ENCODE measurements at regions of chr3 and their contacts with region 1.

Region 1: DNA sequence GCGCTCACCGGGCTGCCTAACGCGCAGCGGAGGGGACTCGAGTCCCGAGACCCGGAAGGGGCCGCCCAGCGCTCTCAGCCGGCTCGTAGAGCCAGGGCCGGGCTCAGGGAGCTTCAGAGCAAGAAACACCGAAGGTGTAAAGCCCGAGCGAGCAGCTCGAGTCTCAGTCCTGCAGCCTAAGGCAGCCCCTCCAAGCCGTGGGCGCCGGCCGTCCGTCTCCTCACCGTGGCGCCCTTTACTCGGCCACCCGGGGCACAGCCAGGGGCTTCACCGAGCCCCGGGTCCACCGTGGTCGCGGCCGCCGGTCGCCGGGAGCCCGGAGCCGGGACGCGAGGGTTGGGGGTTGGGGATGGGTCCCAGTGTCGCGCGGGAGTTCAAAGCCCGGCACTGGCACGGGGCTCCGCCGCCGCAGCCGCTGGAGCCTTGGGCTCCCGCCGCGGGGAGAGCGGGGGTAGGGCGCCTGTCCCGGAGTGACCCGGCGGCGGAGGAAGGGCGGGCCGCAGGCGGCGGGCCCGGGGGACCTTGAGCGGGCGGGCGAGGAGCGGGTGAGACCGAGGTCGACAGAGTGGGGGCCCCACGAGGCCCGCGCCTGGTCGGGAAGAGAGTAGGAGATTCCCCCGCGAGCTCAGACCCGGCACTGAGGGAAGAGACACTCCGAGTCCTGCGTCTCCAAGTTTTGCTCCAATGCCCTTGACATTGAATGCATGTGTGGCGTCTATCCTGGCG is 26.9 kb upstream of the THRB start:
- DNase-seq: peak; percentile 63
- ATAC-seq: peak; percentile 85
- H3K4me3 ChIP-seq: peak overlapping the region in 4 of 5 experiments; percentile 58 to 73 (median 70)
- H3K4me3 Mint-ChIP-seq: peak overlapping the region; percentile 88
- H3K27ac ChIP-seq: peak overlapping the region in 1 of 2 donors; percentile 53
- H3K27ac Mint-ChIP-seq: no peak overlapping the region
- H3K4me1 ChIP-seq: peaks cover 21 to 28% of the 10 kb centered on the region in 2 donors
- H3K4me1 Mint-ChIP-seq: peaks cover 28% of the 10 kb centered on the region
- H3K27me3 ChIP-seq: peaks cover 0 to 28% (median 16%) of the 10 kb centered on the region in 4 experiments
- H3K27me3 Mint-ChIP-seq: peaks cover 23% of the 10 kb centered on the region
- CTCF ChIP-seq: no peak

Region 2: GRCh38 chr3:24494618-24495325 is 26.8 kb before region 1 on chr3 and contains the start of gene THRB:
- CTCF ChIA-PET with region 1: interaction called, 4 read pairs
- POLR2A ChIA-PET with region 1: no interaction called
- intact Hi-C with region 1: loop called (anchors 2 kb)
- DNase-seq: peak; percentile 75
- ATAC-seq: peak; percentile 66
- H3K4me3 ChIP-seq: peak within 1 kb of the TSS; percentile 2 to 77 (median 71)
- H3K4me3 Mint-ChIP-seq: peak within 1 kb of the TSS; percentile 95
- H3K27ac ChIP-seq: peak within 1 kb of the TSS; percentile 29 to 68
- H3K27ac Mint-ChIP-seq: peak within 1 kb of the TSS; percentile 89
- H3K4me1 ChIP-seq: peaks cover 10 to 22% of the 10 kb centered on the region in 2 donors
- H3K4me1 Mint-ChIP-seq: peaks cover 18% of the 10 kb centered on the region
- H3K27me3 ChIP-seq: peaks cover 0 to 21% (median 6%) of the 10 kb centered on the region in 4 experiments
- H3K27me3 Mint-ChIP-seq: peaks cover 32% of the 10 kb centered on the region
- CTCF ChIP-seq: peak; percentile 33
- total RNA-seq, gene THRB: 0.86 and 1.2 TPM in 2 replicates

Region 3: DNA sequence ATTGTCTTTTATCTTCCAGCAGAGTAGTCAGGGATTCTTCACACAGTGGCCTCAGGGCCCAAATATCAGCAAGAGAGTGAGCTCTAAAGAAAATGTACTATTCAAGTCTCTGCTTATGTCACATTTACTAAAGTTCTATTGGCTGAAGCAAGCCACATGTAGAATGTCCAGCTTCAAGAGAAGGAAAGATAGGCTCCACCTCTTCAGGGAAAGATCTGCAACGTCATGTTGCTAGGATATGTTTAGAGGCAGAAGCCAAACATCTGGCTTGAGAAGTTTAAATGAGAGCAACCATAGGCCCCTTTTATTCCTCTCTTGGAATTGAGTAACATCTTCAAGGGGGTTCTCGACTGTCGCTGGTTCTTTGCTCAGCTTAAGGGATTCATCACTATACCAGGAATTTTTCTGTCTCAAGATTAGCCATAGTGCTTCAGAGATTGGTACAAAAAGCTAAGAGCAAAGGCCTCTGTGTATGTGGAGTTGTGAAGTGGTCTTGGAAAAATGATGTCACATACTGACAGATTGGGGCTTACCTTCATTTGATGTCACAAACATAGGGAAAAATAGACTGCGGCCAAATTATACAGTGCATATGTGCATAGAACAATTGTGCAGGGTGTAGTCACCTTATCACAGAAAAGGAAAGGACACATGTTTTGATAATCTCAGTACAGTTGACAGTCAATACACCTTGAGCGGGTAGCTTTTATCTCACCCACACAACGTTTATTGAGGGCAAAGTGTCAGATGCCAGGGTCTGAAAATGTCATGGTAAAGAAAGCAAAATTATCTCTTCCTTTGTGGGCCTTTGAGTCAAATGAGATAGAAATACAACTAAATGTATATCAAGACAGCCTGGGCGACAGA is 15.7 kb before region 1 on chr3:
- CTCF ChIA-PET with region 1: no interaction called
- POLR2A ChIA-PET with region 1: no interaction called
- intact Hi-C with region 1: loop called (anchors 2 kb)
- DNase-seq: no peak
- ATAC-seq: no peak
- H3K4me3 ChIP-seq: no peak overlapping the region
- H3K4me3 Mint-ChIP-seq: no peak overlapping the region
- H3K27ac ChIP-seq: no peak overlapping the region
- H3K27ac Mint-ChIP-seq: no peak overlapping the region
- H3K4me1 ChIP-seq: peaks cover 53 to 58% of the 10 kb centered on the region in 2 donors
- H3K4me1 Mint-ChIP-seq: peaks cover 58% of the 10 kb centered on the region
- H3K27me3 ChIP-seq: no peaks in the 10 kb centered on the region
- H3K27me3 Mint-ChIP-seq: no peaks in the 10 kb centered on the region
- CTCF ChIP-seq: no peak